Right ventricle myocardium inferior (tissue), 1 donor: ENCODE measurements at regions of chr14 and their contacts with region 1.

Region 1: GRCh38 chr14:68248481-68249255 is 429.1 kb downstream of the RAD51B start:
- DNase-seq: peak; percentile 52
- ATAC-seq: peak; percentile 62

Region 2: DNA sequence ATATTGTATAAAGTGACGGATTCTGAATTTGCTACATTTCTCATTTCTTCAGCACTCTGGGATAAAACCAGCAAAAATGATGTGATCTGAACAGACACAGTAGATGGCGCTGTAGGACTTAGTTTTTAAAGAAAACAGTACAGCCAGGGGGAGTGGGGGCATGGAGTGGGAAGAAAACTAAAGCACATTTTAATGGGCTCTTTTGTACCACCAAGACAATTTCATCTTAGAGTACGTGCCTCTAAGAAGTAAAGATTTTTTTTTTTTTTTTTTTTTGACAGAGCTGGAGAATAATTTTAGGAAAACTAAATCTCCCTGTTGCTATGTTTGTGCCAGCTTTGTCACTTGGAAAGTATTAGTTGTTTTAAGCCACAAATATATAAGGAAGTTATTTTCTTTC is 304.7 kb before region 1 on chr14:
- intact Hi-C with region 1: loop called (anchors 2 kb)
- DNase-seq: no peak
- ATAC-seq: peak; percentile 59

Region 3: GRCh38 chr14:68359837-68360552 is 111.3 kb after region 1 on chr14:
- intact Hi-C with region 1: loop called (anchors 10 kb)
- DNase-seq: peak; percentile 78
- ATAC-seq: peak; percentile 87

Region 4: DNA sequence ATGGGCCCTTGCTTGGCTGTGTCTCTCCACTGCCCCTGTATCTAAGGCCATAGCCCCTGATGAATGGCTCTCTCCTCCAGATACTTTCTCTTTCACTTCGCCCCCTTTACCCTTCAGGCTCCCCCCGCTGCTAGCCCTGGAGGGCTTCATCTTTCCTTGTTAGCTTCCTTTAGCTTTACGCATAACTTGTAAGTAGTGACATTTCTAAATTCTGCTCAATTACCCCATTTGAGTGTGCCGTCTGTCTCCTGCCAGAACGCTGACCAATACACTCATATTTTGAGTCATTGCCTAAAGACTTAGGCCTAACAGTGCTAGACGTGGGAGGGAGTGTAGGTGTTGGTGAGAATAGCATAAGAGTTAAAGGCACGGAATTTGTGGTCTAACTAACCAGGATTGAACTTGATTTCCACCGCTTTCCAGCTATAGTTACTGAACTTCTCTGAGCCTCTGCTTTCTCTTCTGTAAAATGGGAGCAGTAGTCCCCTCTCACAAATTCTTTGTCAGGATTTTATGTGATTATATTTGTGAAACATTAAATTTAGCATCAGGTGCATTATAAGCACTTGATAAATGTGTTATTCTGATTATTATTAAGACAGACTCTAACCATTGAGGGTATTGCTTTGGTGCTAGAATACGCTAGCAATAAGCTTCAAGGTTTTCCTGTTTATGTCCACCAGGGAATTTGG is 414.9 kb after region 1 on chr14:
- intact Hi-C with region 1: loop called (anchors 10 kb)
- DNase-seq: no peak
- ATAC-seq: no peak

Region 5: GRCh38 chr14:68795597-68796417 is 547.1 kb after region 1 on chr14:
- intact Hi-C with region 1: loop called (anchors 1 kb)
- DNase-seq: peak; percentile 92
- ATAC-seq: peak; percentile 61